ENCODE measurements at regions of chr3 and their contacts with region 1.

Region 1: DNA sequence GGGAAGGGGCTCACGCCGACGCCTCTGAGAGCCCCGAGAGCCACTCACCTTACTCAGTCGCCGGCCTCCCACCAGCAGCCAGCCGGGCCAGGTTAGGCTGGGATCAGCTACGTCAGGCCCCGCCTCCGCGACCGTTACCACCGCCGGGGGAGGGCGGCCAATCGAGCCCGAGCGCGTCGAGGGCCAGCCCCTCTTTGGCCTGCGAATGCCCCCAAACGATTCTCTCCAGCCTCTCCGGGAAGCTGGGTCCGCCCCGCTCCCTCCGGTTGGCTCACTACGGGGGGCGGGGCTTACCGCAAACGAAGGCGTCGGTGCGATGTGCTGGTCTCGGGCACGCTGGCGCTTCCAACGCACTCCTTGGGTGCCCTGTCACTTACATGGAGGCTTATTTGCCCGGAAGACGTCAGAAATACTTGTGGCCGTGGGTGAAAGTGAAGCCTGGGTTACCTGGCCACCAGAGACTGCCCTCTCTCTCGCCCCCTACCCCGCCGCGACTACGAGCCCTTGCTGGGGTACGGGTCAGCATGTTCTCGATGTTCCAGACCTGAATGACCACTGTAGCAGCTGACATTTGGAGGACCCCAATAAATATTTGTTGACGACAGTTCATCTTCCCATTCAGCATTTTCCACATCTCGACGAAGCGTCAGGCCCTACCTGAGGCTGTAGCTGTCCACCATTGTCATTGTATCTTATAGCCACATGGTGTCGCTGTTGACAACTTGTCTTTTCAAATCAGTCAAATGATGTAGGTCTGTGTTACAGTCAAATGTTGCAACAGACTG is at the start of gene CEP70:
- DNase-seq: peak; percentile 79 to 92 (median 89)
- ATAC-seq: peak; percentile 95
- H3K4me3 ChIP-seq: peak within 1 kb of the TSS; percentile 96
- H3K4me3 Mint-ChIP-seq: peak within 1 kb of the TSS; percentile 87 to 96 (median 90)
- H3K27ac ChIP-seq: peak within 1 kb of the TSS; percentile 79
- H3K27ac Mint-ChIP-seq: peak within 1 kb of the TSS; percentile 82 to 99 (median 94)
- H3K4me1 ChIP-seq: peaks cover 0 to 4% of the 10 kb centered on the region in 2 donors
- H3K4me1 Mint-ChIP-seq: peaks cover 0 to 17% (median 12%) of the 10 kb centered on the region in 7 donors
- H3K27me3 ChIP-seq: no peaks in the 10 kb centered on the region
- H3K27me3 Mint-ChIP-seq: no peaks in the 10 kb centered on the region
- total RNA-seq, gene CEP70: 11.8 to 35.1 (median 21.1) TPM

Region 2: DNA sequence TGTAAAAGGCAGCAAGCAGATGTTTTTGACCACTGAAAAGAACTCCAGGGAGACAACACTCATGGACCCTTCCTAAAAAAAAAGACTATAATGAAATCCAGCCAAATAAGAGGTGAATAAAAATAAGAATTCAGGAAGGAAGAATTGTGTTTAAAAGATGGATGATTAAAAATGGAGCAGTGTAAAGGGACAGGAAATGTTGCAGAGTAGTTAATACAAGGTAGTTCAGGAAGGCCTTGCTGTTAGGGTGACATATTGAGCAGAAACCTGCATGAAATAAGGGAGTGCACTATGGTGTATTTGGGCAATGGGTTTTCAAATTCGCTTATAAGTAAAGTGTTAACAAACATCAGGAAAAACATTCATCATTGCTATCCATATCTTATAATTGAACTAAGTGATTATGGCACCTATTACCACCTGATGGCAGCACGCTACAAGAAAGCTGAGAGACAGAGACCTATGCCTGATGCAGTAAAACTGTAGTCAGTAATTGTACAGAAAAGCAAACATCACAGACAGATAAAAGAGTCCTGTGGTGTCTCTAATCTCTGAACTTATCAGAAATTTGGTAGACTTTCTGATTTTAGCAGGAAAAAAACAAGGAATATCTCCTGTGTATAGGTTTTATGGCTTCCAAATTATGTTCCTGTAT is 413.8 kb before region 1 on chr3:
- CTCF ChIA-PET with region 1: no interaction called
- POLR2A ChIA-PET with region 1: interaction called, 4 read pairs
- intact Hi-C with region 1: loop called in 1 of 2 experiments (anchors 1 kb)
- DNase-seq: peak in 7 of 9 donors; percentile 16 to 53 (median 38)
- ATAC-seq: peak; percentile 95
- H3K4me3 ChIP-seq: no peak overlapping the region
- H3K4me3 Mint-ChIP-seq: no peak overlapping the region
- H3K27ac ChIP-seq: no peak overlapping the region
- H3K27ac Mint-ChIP-seq: no peak overlapping the region
- H3K4me1 ChIP-seq: no peaks in the 10 kb centered on the region
- H3K4me1 Mint-ChIP-seq: peaks cover 0 to 13% (median 5%) of the 10 kb centered on the region in 7 donors
- H3K27me3 ChIP-seq: no peaks in the 10 kb centered on the region
- H3K27me3 Mint-ChIP-seq: peaks cover 0 to 32% (median 9%) of the 10 kb centered on the region in 5 donors

Region 3: GRCh38 chr3:138434276-138434874 is 160.0 kb before region 1 on chr3 and contains the start of gene ESYT3:
- CTCF ChIA-PET with region 1: no interaction called
- POLR2A ChIA-PET with region 1: no interaction called
- intact Hi-C with region 1: loop called in 1 of 2 experiments (anchors 1 kb)
- DNase-seq: peak in 4 of 9 donors; percentile 11 to 67 (median 16)
- ATAC-seq: peak; percentile 72
- H3K4me3 ChIP-seq: peak within 1 kb of the TSS; percentile 37
- H3K4me3 Mint-ChIP-seq: peak within 1 kb of the TSS; percentile 51 to 87 (median 66)
- H3K27ac ChIP-seq: no peak within 1 kb of the TSS
- H3K27ac Mint-ChIP-seq: peak within 1 kb of the TSS in 2 of 9 donors; percentile 5 to 13
- H3K4me1 ChIP-seq: no peaks in the 10 kb centered on the region
- H3K4me1 Mint-ChIP-seq: peaks cover 0 to 20% (median 12%) of the 10 kb centered on the region in 7 donors
- H3K27me3 ChIP-seq: no peaks in the 10 kb centered on the region
- H3K27me3 Mint-ChIP-seq: peaks cover 40 to 70% (median 61%) of the 10 kb centered on the region in 5 donors
- total RNA-seq, gene ESYT3: 0.32 to 0.41 TPM in 2 of 5 experiments, not detected in the others

Region 4: GRCh38 chr3:138608322-138609135 is 14.2 kb after region 1 on chr3 and contains the start of gene FAIM:
- CTCF ChIA-PET with region 1: interaction called, 16 read pairs
- POLR2A ChIA-PET with region 1: interaction called, 27 read pairs
- intact Hi-C with region 1: loop called (anchors 1 kb)
- DNase-seq: peak; percentile 54 to 82 (median 77)
- ATAC-seq: peak; percentile 84
- H3K4me3 ChIP-seq: peak within 1 kb of the TSS; percentile 81
- H3K4me3 Mint-ChIP-seq: peak within 1 kb of the TSS; percentile 84 to 96 (median 91)
- H3K27ac ChIP-seq: peak within 1 kb of the TSS; percentile 90
- H3K27ac Mint-ChIP-seq: peak within 1 kb of the TSS; percentile 84 to 100 (median 98)
- H3K4me1 ChIP-seq: peaks cover 14 to 15% of the 10 kb centered on the region in 2 donors
- H3K4me1 Mint-ChIP-seq: peaks cover 6 to 21% (median 18%) of the 10 kb centered on the region in 7 donors
- H3K27me3 ChIP-seq: no peaks in the 10 kb centered on the region
- H3K27me3 Mint-ChIP-seq: peaks cover 0 to 3% (median 0%) of the 10 kb centered on the region in 5 donors
- total RNA-seq, gene FAIM: 1.6 to 3.3 (median 2.6) TPM

Region 5: DNA sequence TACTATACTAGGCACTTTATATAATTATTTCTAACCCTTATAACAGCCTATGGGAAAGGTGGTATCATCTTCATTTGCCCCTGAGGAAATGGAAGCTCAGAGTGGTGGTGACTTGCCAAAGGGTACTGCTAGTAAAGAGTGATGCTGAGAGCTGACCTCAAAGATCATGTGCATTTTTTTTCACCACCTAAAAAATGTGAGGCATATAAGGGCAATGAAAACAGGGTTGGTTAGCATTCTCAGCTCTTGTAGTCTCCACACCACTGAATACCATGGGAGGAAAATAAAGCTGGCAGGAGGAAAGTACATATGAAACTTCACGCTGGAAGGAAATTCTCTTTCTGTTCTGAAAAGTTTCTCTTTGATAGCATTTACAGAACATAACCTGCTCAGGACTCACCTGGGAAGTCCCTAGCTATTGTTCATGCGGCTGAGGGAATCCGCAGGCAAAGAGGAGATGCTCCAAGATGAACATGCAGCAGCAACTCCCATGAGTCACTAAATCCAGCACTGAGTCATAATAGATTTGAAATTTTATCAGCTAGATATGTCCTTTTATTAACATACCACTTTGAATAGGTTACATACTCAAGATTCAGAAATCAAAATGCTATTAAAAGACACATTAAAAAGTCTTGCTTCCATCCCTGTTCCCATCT is 31.5 kb after region 1 on chr3:
- CTCF ChIA-PET with region 1: no interaction called
- POLR2A ChIA-PET with region 1: no interaction called
- intact Hi-C with region 1: no loop called
- DNase-seq: no peak
- ATAC-seq: no peak
- H3K4me3 ChIP-seq: no peak overlapping the region
- H3K4me3 Mint-ChIP-seq: no peak overlapping the region
- H3K27ac ChIP-seq: no peak overlapping the region
- H3K27ac Mint-ChIP-seq: peak overlapping the region in 1 of 9 donors; percentile 12
- H3K4me1 ChIP-seq: no peaks in the 10 kb centered on the region
- H3K4me1 Mint-ChIP-seq: no peaks in the 10 kb centered on the region
- H3K27me3 ChIP-seq: no peaks in the 10 kb centered on the region
- H3K27me3 Mint-ChIP-seq: no peaks in the 10 kb centered on the region

Region 6: DNA sequence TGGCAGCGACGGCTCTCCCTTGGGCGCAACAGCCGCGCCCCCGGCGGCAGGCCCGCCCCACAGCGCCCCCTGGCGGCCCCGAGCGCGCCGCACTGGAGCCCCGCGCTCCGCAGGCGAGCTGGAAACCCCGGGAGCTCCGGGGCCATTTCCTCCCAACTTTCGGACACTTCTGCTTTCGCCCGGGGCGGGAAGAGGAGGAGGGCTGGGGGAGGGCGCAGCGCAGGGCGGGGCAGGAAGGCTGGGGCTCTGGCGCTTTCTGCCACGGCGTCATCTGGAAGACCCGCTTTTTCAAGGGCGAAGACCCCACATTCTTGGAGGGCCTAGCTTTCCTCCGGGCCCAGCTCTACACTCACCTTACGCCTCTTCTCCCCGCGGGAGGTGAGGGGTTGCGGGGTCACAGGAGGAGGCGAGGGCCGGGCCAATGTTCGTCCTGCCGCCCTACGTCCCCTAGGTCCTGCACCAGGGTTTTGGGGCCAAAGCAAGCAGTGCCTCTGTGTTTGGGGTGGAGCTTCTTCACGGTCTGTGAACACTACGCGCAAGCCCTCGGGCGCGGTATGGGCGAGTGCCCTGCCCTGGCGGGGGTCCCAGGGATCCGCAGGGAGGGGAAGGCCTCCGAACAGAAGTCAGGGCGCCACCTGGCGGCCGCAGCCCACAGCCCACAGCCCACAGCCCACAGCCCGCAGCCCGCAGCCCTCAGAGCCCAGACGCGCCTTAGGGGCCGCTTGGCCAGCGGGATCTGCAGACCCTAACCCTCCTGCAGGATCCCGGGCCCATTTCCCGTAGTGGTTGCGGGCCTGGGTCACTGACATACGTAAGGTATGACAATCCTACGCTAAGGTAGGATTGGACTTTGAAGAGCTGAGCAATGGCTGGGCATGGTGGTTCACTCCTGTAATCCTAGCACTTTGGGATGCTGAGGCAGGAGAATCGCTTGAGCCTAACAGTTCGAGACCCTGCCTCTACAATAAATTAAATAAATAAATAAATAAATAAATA is 321.5 kb after region 1 on chr3:
- CTCF ChIA-PET with region 1: interaction called, 82 read pairs
- POLR2A ChIA-PET with region 1: interaction called, 26 read pairs
- intact Hi-C with region 1: loop called (anchors 1 kb)
- DNase-seq: peak; percentile 66 to 91 (median 80)
- ATAC-seq: peak; percentile 90
- H3K4me3 ChIP-seq: peak overlapping the region; percentile 88
- H3K4me3 Mint-ChIP-seq: peak overlapping the region; percentile 54 to 88 (median 86)
- H3K27ac ChIP-seq: peak overlapping the region; percentile 62
- H3K27ac Mint-ChIP-seq: peak overlapping the region in 6 of 9 donors; percentile 21 to 77 (median 62)
- H3K4me1 ChIP-seq: no peaks in the 10 kb centered on the region
- H3K4me1 Mint-ChIP-seq: peaks cover 5 to 9% (median 6%) of the 10 kb centered on the region in 7 donors
- H3K27me3 ChIP-seq: no peaks in the 10 kb centered on the region
- H3K27me3 Mint-ChIP-seq: peaks cover 0 to 37% (median 0%) of the 10 kb centered on the region in 5 donors

Region 7: GRCh38 chr3:139389458-139390209 is 795.3 kb after region 1 on chr3 and contains the start of gene COPB2:
- CTCF ChIA-PET with region 1: no interaction called
- POLR2A ChIA-PET with region 1: interaction called, 3 read pairs
- intact Hi-C with region 1: loop called (anchors 1 to 5 kb)
- DNase-seq: peak; percentile 84 to 97 (median 87)
- ATAC-seq: peak; percentile 97
- H3K4me3 ChIP-seq: peak within 1 kb of the TSS; percentile 91
- H3K4me3 Mint-ChIP-seq: peak within 1 kb of the TSS; percentile 87 to 100 (median 99)
- H3K27ac ChIP-seq: peak within 1 kb of the TSS; percentile 93
- H3K27ac Mint-ChIP-seq: peak within 1 kb of the TSS; percentile 97 to 100 (median 99)
- H3K4me1 ChIP-seq: peaks cover 5 to 13% of the 10 kb centered on the region in 2 donors
- H3K4me1 Mint-ChIP-seq: peaks cover 34 to 70% (median 60%) of the 10 kb centered on the region in 7 donors
- H3K27me3 ChIP-seq: no peaks in the 10 kb centered on the region
- H3K27me3 Mint-ChIP-seq: peaks cover 0 to 13% (median 0%) of the 10 kb centered on the region in 5 donors
- total RNA-seq, gene COPB2: 23.5 to 109 (median 64.5) TPM